ENCODE measurements at regions of chrX and their contacts with region 1.

Region 1: GRCh38 chrX:130916636-130917422 is 13.8 kb upstream of the ENOX2 start:
- DNase-seq: no peak

Region 2: GRCh38 chrX:130393451-130394074 is 523.3 kb before region 1 on chrX:
- intact Hi-C with region 1: loop called (anchors 5 kb)
- DNase-seq: no peak

Region 3: GRCh38 chrX:130539721-130540321 is 377.0 kb before region 1 on chrX:
- intact Hi-C with region 1: loop called (anchors 2 kb)
- DNase-seq: no peak

Measured in cardiac septum (tissue), 1 donor.